HCT116 (cell line): ENCODE measurements at regions of chr6 and their contacts with region 1.

Region 1: DNA sequence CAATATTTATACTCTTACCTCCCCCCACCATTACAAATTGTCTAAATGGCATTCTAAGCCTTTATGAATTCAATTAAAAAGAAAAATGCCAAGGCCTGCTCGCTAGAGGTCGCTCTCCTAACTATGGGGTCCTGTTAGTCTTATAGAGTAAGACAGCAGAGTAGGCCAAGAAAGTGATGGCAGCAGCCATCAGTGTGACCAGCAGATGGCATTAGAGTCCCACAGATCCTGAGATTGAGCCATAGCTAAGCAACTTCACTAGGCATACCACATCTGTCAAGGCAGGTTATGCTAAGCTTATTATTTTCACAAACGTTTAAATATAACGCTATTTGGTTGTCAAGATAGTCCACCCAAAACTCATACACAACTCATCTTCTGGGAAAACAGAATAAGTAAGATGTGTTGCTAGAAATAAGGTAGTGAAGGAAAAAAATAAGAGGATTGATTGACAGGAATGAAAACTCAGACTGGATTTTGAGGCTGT is 57.6 kb upstream of the SCAF8 start:
- DNase-seq: peak; percentile 94
- ATAC-seq: peak; percentile 99
- H3K4me3 ChIP-seq: no peak overlapping the region
- H3K27ac ChIP-seq: no peak overlapping the region
- H3K4me1 ChIP-seq: no peaks in the 10 kb centered on the region
- H3K27me3 ChIP-seq: no peaks in the 10 kb centered on the region
- CTCF ChIP-seq: peak; percentile 99 to 100 (median 99)
- POLR2A ChIP-seq: no peak
- RAD21 ChIP-seq: peak; percentile 100

Region 2: DNA sequence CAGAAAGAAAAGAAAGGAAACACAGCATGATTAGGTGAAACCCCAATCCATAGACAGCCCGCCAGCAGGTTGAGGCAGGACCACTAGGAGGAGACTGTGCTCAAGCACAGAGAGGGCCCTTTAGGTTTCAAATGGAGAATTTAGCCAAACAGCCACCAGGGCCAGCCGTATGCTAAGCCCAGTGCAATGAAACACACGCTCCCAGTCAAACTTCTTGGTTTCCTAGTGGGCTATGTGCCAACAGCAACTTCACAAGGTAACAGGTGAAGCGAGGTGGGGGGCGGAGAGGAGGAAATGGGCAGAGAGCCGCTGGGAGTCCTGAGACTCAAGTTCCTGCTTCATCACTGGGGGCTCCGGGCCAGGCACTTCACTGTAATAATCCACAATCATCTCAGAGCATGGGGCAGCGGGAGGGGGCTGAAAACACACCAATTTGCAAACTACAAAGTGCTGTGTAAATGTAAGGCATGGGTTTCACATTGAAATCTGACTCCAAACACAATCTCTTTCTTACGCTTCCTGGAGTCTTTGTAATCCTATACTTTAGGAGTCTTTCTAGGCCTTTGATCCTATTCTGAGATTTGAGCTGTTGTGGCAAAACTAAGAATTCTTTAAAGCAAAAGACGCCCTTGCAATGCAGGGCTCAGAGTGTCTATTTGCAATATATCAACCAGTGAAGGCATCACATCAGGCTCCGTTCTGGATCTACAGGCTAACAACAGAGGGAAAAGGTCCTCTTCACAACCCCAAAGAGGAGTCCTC is 519.3 kb before region 1 on chr6:
- CTCF ChIA-PET with region 1: no interaction called
- POLR2A ChIA-PET with region 1: no interaction called
- RAD21 ChIA-PET with region 1: no interaction called
- intact Hi-C with region 1: loop called (anchors 1 kb)
- DNase-seq: peak; percentile 52
- ATAC-seq: peak; percentile 99
- H3K4me3 ChIP-seq: no peak overlapping the region
- H3K27ac ChIP-seq: no peak overlapping the region
- H3K4me1 ChIP-seq: no peaks in the 10 kb centered on the region
- H3K27me3 ChIP-seq: no peaks in the 10 kb centered on the region
- CTCF ChIP-seq: peak; percentile 80 to 88 (median 82)
- POLR2A ChIP-seq: no peak
- RAD21 ChIP-seq: peak; percentile 83

Region 3: GRCh38 chr6:154733012-154733625 is 57.5 kb after region 1 on chr6 and contains the start of gene SCAF8:
- CTCF ChIA-PET with region 1: interaction called, 5 read pairs
- POLR2A ChIA-PET with region 1: no interaction called
- RAD21 ChIA-PET with region 1: no interaction called
- intact Hi-C with region 1: loop called (anchors 5 kb)
- DNase-seq: peak; percentile 53
- ATAC-seq: peak; percentile 76
- H3K4me3 ChIP-seq: peak within 1 kb of the TSS; percentile 69 to 71
- H3K27ac ChIP-seq: peak within 1 kb of the TSS; percentile 98
- H3K4me1 ChIP-seq: peaks cover 3 to 19% of the 10 kb centered on the region in 2 experiments; a peak in 3 of 4 replicates
- H3K27me3 ChIP-seq: no peaks in the 10 kb centered on the region
- CTCF ChIP-seq: peak; percentile 32 to 76 (median 62); a peak in 5 of 6 replicates
- POLR2A ChIP-seq: peak; percentile 46
- RAD21 ChIP-seq: peak; percentile 45; the same call in 1 of the 2 replicates
- total RNA-seq, gene SCAF8: 34.6 TPM

Region 4: GRCh38 chr6:154868143-154868594 is 192.5 kb after region 1 on chr6:
- CTCF ChIA-PET with region 1: interaction called, 11 read pairs
- POLR2A ChIA-PET with region 1: no interaction called
- RAD21 ChIA-PET with region 1: no interaction called
- intact Hi-C with region 1: loop called (anchors 1 kb)
- DNase-seq: peak; percentile 12
- ATAC-seq: peak; percentile 68
- H3K4me3 ChIP-seq: no peak overlapping the region
- H3K27ac ChIP-seq: no peak overlapping the region
- H3K4me1 ChIP-seq: no peaks in the 10 kb centered on the region
- H3K27me3 ChIP-seq: no peaks in the 10 kb centered on the region
- CTCF ChIP-seq: peak; percentile 29 to 80 (median 67); a peak in 5 of 6 replicates
- POLR2A ChIP-seq: no peak
- RAD21 ChIP-seq: peak; percentile 70

Region 5: GRCh38 chr6:155174576-155175211 is 499.0 kb after region 1 on chr6:
- CTCF ChIA-PET with region 1: interaction called, 13 read pairs
- POLR2A ChIA-PET with region 1: no interaction called
- RAD21 ChIA-PET with region 1: no interaction called
- intact Hi-C with region 1: loop called (anchors 1 kb)
- DNase-seq: peak; percentile 85
- ATAC-seq: peak; percentile 86
- H3K4me3 ChIP-seq: no peak overlapping the region
- H3K27ac ChIP-seq: no peak overlapping the region
- H3K4me1 ChIP-seq: peaks cover 19 to 37% of the 10 kb centered on the region in 2 experiments
- H3K27me3 ChIP-seq: no peaks in the 10 kb centered on the region
- CTCF ChIP-seq: peak; percentile 65 to 94 (median 72)
- POLR2A ChIP-seq: no peak
- RAD21 ChIP-seq: peak; percentile 96

Region 6: GRCh38 chr6:155314773-155315515 is 639.3 kb after region 1 on chr6:
- CTCF ChIA-PET with region 1: interaction called, 5 read pairs
- POLR2A ChIA-PET with region 1: no interaction called
- RAD21 ChIA-PET with region 1: no interaction called
- intact Hi-C with region 1: loop called (anchors 5 kb)
- DNase-seq: peak; percentile 82
- ATAC-seq: peak; percentile 59
- H3K4me3 ChIP-seq: peak overlapping the region; percentile 89 to 92
- H3K27ac ChIP-seq: peak overlapping the region; percentile 77
- H3K4me1 ChIP-seq: peaks cover 5 to 14% of the 10 kb centered on the region in 2 experiments; a peak in 3 of 4 replicates
- H3K27me3 ChIP-seq: no peaks in the 10 kb centered on the region
- CTCF ChIP-seq: no peak
- POLR2A ChIP-seq: peak; percentile 88
- RAD21 ChIP-seq: peak; percentile 16; the same call in 1 of the 2 replicates